Mammary epithelial cell (primary cell): ENCODE measurements at regions of chr15 and their contacts with region 1.

Region 1: DNA sequence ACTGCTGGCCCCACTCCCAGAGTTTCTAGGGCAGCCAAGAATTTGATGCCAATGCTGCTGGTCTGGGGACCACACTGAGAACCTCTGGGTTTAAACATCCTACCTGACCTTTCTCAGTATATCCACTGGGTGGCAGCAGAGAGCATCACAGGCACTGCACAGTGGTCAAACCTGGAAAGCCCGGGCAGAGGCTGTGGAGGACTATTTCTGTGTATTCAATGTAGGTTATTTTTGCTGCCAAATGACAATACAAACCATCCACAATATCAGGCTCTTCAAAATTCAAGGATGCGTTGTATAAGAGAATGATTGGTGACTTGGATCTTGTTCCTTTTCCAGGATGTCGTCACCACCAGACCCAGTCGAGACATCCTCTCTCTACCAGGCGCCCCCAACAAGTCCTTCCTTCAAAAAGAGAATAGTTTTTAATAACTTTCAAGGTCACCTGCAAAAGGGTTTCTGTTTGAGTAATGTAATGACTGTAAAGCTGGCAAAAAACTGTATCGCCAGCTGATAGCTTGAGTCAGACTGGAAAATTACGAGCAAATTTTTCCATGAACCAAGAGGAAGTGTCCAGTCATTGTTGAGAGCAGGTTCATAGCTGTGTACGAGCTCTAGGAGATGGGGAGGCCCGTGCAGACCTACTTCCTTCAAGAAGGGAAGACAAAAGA is 30.5 kb upstream of the MYZAP start:
- DNase-seq: peak; percentile 75
- H3K4me3 ChIP-seq: no peak overlapping the region
- H3K27ac ChIP-seq: peak overlapping the region; percentile 40
- H3K4me1 ChIP-seq: peaks cover 15% of the 10 kb centered on the region
- H3K27me3 ChIP-seq: no peaks in the 10 kb centered on the region
- CTCF ChIP-seq: peak; percentile 76 to 90

Region 2: GRCh38 chr15:57298843-57299550 is 262.2 kb before region 1 on chr15:
- CTCF ChIA-PET with region 1: no interaction called
- dilution Hi-C with region 1: no loop called
- in situ Hi-C with region 1: no loop called
- intact Hi-C with region 1: no loop called
- DNase-seq: no peak
- H3K4me3 ChIP-seq: no peak overlapping the region
- H3K27ac ChIP-seq: no peak overlapping the region
- H3K4me1 ChIP-seq: peaks cover 6% of the 10 kb centered on the region
- H3K27me3 ChIP-seq: no peaks in the 10 kb centered on the region
- CTCF ChIP-seq: no peak

Region 3: GRCh38 chr15:57611938-57612337 is 50.8 kb after region 1 on chr15:
- CTCF ChIA-PET with region 1: interaction called, 6 read pairs
- dilution Hi-C with region 1: no loop called
- in situ Hi-C with region 1: loop called (anchors 5 kb)
- intact Hi-C with region 1: loop called (anchors 1 kb)
- DNase-seq: peak; percentile 89
- H3K4me3 ChIP-seq: no peak overlapping the region
- H3K27ac ChIP-seq: peak overlapping the region; percentile 61
- H3K4me1 ChIP-seq: peaks cover 23% of the 10 kb centered on the region
- H3K27me3 ChIP-seq: no peaks in the 10 kb centered on the region
- CTCF ChIP-seq: peak; percentile 51 to 88

Region 4: DNA sequence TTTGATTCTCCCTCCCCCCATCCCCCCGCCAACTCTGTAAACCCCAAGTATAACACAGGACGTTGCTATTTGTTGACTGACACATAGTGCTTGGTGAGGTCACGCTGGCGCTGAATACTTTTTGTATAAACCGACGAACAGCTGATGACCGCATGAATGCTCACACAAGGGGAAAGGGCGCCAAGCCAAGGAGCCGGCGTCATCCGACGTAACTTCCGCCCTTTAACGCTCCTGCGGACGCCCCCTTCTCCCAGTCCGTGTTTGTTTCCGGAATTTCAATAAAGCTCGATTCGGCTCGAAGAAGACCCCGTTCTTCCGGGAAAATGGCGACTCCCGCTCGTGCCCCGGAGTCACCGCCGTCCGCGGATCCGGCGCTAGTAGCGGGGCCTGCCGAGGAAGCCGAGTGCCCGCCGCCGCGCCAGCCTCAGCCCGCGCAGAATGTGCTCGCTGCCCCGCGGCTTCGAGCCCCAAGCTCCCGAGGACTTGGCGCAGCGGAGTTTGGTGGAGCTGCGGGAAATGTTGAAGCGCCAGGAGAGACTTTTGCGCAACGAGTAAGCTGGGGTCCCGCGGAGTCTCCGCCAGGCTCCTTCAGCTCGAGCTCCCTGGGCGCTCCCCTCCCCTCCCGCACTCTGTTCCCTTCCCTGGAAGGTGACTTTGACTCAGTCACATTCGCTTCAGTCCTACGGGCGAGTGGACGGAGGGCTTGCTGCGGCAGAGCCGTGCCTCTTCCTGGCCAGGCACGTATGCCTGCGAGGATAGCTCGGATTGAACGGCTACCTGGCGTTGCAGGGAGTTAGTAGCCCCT is 145.4 kb after region 1 on chr15 and contains the start of gene POLR2M:
- CTCF ChIA-PET with region 1: no interaction called
- dilution Hi-C with region 1: no loop called
- in situ Hi-C with region 1: no loop called
- intact Hi-C with region 1: loop called (anchors 5 kb)
- DNase-seq: peak; percentile 97
- H3K4me3 ChIP-seq: peak within 1 kb of the TSS; percentile 86 to 98 (median 95)
- H3K27ac ChIP-seq: peak within 1 kb of the TSS; percentile 94
- H3K4me1 ChIP-seq: peaks cover 27% of the 10 kb centered on the region
- H3K27me3 ChIP-seq: no peaks in the 10 kb centered on the region
- CTCF ChIP-seq: no peak
- total RNA-seq, gene POLR2M: 82.9 to 109 TPM

Region 5: DNA sequence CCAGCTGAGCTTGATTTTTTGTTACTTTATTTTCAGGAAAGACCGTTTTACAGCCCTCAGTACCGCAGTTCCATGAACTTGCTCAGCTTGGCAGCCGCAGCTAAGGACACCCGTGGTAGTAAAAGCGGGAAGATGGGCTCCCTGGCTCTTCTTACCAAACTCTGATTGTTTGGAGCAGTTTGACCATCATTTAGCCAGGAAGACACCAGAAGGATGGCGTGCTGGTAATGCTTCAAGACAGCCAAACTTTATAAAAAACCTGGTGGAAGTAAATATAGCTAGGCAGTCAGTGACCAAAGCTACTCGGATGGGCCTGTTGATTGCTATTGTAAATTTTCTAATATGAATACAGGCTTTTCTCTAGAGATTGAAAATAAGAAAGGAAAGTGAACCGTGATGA is 174.3 kb after region 1 on chr15:
- CTCF ChIA-PET with region 1: no interaction called
- dilution Hi-C with region 1: no loop called
- in situ Hi-C with region 1: no loop called
- intact Hi-C with region 1: no loop called
- DNase-seq: no peak
- H3K4me3 ChIP-seq: no peak overlapping the region
- H3K27ac ChIP-seq: no peak overlapping the region
- H3K4me1 ChIP-seq: peaks cover 13% of the 10 kb centered on the region
- H3K27me3 ChIP-seq: no peaks in the 10 kb centered on the region
- CTCF ChIP-seq: no peak

Region 6: DNA sequence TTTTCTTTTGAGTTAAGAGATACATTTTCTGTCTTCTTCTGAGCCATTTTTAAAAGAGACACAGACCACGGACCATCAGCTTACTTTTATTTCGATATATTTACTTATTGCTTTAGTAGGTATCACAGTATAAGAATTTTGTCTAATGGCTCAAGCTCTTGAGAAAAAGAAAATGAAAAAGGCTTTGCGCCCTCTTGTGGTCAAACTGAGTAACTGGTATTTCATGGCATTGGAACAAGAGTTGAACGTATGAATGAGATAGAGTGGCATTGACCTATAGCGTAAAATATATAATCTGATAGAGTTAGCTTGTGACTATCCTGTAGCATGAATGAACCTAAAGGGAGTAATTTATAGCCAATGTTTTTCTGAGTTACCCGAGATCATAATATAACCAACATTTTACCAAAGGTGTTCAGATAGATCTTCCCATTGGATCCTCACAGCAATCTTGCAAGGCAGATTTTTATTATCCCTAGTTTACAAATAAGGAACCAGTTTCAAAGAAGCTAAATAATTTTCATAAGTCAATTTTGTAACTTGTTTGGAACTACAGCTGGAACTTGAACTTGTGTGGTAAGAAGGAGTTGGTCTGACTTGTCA is 300.0 kb after region 1 on chr15:
- CTCF ChIA-PET with region 1: no interaction called
- dilution Hi-C with region 1: no loop called
- in situ Hi-C with region 1: loop called in 1 of 2 experiments (anchors 10 kb)
- intact Hi-C with region 1: loop called (anchors 2 kb)
- DNase-seq: peak; percentile 61
- H3K4me3 ChIP-seq: no peak overlapping the region
- H3K27ac ChIP-seq: no peak overlapping the region
- H3K4me1 ChIP-seq: peaks cover 8% of the 10 kb centered on the region
- H3K27me3 ChIP-seq: no peaks in the 10 kb centered on the region
- CTCF ChIP-seq: peak; percentile 66 to 75

Region 7: DNA sequence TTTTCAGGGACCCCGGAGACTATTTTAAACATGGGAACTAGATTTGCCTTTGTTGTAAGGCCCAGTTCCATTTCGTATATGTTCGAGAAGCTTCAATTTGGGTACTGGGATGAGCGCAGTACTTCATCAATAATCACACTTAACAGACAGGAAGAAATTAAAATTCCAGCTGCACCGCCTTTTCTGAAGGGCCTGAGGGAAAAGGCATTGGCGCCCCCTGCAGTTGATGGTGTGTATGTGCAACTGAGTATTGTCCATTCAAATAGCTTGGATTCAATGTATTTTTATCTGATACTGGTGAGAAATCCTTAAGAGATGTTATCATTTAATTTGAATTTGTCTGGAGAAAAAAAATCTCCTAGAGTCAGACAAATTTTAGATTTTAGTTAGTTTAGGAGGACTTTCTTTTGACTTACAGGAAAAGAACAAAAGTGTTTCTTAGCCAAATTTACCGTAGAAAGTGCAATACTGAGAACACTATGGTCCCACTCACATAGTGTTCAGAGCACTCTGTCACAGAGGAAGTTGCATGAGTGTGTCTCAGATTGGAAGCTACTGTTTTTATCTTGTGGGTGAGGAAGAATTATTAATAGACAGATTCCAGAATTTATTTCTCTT is 509.7 kb after region 1 on chr15:
- CTCF ChIA-PET with region 1: no interaction called
- dilution Hi-C with region 1: no loop called
- in situ Hi-C with region 1: no loop called
- intact Hi-C with region 1: loop called (anchors 1 kb)
- DNase-seq: peak; percentile 37
- H3K4me3 ChIP-seq: no peak overlapping the region
- H3K27ac ChIP-seq: no peak overlapping the region
- H3K4me1 ChIP-seq: peaks cover 3% of the 10 kb centered on the region
- H3K27me3 ChIP-seq: peaks cover 1% of the 10 kb centered on the region
- CTCF ChIP-seq: peak; percentile 95 to 99